T-cell (primary cell): ENCODE measurements at regions of chr22 and their contacts with region 1.

Region 1: GRCh38 chr22:44664149-44664548 is 37.9 kb upstream of the PRR5 start:
- DNase-seq: peak in 34 of 35 experiments; percentile 19 to 69 (median 45)
- ATAC-seq: peak; percentile 19 to 63 (median 43)
- H3K4me3 ChIP-seq: peak overlapping the region in 1 of 2 donors; percentile 5
- H3K4me3 Mint-ChIP-seq: peak overlapping the region in 1 of 3 donors; percentile 69
- H3K27ac ChIP-seq: peak overlapping the region; percentile 80
- H3K27ac Mint-ChIP-seq: peak overlapping the region; percentile 83 to 85
- H3K4me1 ChIP-seq: peaks cover 24 to 69% of the 10 kb centered on the region in 2 experiments
- H3K4me1 Mint-ChIP-seq: peaks cover 46 to 52% (median 48%) of the 10 kb centered on the region in 3 donors
- H3K27me3 ChIP-seq: peaks cover 0 to 3% of the 10 kb centered on the region in 2 experiments
- H3K27me3 Mint-ChIP-seq: no peaks in the 10 kb centered on the region

Region 2: DNA sequence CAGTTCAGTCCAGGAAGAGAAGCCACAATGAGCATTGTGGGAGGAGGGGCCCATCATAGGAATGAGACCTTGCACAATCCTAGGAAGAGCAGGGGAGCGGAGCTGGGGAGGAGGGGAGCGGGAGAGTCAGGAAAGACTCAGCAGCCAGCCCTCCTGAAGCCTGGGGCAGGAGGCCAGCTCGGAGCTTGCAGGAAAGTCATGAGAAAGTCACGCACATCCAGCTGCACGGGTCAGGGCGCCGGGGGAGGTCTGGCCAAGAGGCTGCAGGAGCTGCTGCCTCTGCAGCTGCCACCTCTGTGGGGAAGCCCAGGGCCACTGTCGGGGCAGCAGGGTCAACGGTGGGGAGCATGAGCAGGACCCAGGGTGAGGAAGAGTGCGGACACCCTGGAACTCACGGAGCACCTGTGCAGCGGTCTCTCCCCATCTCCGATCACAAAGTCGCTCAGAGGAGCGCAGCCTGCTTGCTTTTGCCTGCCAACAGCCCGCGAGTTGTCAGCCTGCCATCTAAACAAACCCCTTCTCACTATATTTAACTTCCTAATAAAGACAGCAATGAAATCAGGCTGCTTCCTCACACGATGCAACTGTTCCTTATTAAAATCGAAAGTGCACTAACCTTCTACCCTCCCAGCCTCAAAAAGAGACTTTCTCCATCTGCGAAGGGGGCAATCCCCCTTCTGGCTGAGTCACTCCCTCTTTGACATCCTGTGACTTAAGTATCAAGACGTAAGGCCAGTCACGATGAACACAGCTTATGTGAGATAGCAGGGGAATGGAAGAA is 113.2 kb before region 1 on chr22:
- CTCF ChIA-PET with region 1: no interaction called
- POLR2A ChIA-PET with region 1: no interaction called
- DNase-seq: peak in 2 of 35 experiments; percentile 8 to 34
- ATAC-seq: peak in 2 of 4 experiments; percentile 38 to 42
- H3K4me3 ChIP-seq: no peak overlapping the region
- H3K4me3 Mint-ChIP-seq: peak overlapping the region in 1 of 3 donors; percentile 35
- H3K27ac ChIP-seq: no peak overlapping the region
- H3K27ac Mint-ChIP-seq: peak overlapping the region in 1 of 2 donors; percentile 13
- H3K4me1 ChIP-seq: peaks cover 0 to 6% of the 10 kb centered on the region in 2 experiments
- H3K4me1 Mint-ChIP-seq: peaks cover 0 to 9% (median 4%) of the 10 kb centered on the region in 3 donors
- H3K27me3 ChIP-seq: peaks cover 0 to 13% of the 10 kb centered on the region in 2 experiments
- H3K27me3 Mint-ChIP-seq: peaks cover 7 to 16% of the 10 kb centered on the region in 2 donors

Region 3: GRCh38 chr22:44684506-44685383 is 20.6 kb after region 1 on chr22:
- CTCF ChIA-PET with region 1: interaction called in 1 of 2 experiments, 12 read pairs
- POLR2A ChIA-PET with region 1: interaction called in 1 of 2 experiments, 3 read pairs
- DNase-seq: peak; percentile 63 to 92 (median 79)
- ATAC-seq: peak; percentile 85 to 90 (median 88)
- H3K4me3 ChIP-seq: no peak overlapping the region
- H3K4me3 Mint-ChIP-seq: peak overlapping the region; percentile 31 to 69 (median 41)
- H3K27ac ChIP-seq: peak overlapping the region; percentile 42
- H3K27ac Mint-ChIP-seq: peak overlapping the region; percentile 84 to 88
- H3K4me1 ChIP-seq: peaks cover 6 to 64% of the 10 kb centered on the region in 2 experiments
- H3K4me1 Mint-ChIP-seq: peaks cover 32 to 59% (median 47%) of the 10 kb centered on the region in 3 donors
- H3K27me3 ChIP-seq: no peaks in the 10 kb centered on the region
- H3K27me3 Mint-ChIP-seq: no peaks in the 10 kb centered on the region